Activated CD4-positive, alpha-beta memory T cell treated with anti-CD3 and anti-CD28 coated beads for 36 hours (primary cell): ENCODE measurements at regions of chr6 and their contacts with region 1.

Region 1: DNA sequence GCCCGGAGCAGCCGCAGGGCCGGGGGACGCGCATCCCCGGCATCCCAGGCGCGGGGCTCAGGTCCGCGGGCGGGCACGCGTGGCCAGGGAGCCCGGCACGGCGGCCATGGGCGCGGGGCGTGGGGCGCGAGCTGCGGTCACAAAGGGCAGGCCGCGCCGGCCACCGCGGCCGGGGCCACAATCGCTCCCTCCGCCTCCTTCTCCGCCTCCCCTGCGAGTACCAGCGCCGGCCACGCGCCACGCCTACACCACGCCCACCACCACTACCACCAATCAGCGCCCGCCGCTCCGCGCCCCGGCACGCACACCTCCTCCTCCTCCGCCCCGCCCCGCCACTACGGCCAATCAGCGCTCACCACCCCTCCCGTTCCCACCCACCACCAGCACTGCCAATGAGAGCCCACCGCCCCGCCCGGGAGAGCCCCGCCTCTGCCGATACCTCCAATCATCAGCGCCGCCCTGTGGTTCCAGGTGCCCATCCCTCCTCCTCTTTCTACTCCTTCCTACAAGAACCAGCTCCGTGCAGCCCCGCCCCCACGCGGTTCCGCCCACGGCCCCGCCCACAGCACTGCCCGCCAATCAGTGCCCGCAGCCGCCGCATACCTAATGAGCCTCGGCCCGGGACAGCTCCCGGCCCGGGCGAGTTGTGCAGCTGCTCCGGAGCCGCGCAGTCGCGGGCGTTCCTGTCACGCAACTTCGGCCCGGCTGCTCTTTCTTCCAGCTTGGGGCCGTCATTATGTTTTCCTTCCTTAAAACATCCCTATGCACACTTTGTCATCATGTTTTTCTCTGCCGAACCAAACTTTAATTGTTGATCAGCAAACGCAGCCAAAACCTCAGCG is at the start of gene RPS6KA2:
- DNase-seq: peak; percentile 100
- H3K4me3 Mint-ChIP-seq: peak within 1 kb of the TSS; percentile 87
- H3K27ac Mint-ChIP-seq: peak within 1 kb of the TSS; percentile 58
- H3K4me1 Mint-ChIP-seq: peaks cover 12% of the 10 kb centered on the region
- H3K27me3 Mint-ChIP-seq: peaks cover 25% of the 10 kb centered on the region
- total RNA-seq, gene RPS6KA2: 7.7 to 7.9 TPM

Region 2: DNA sequence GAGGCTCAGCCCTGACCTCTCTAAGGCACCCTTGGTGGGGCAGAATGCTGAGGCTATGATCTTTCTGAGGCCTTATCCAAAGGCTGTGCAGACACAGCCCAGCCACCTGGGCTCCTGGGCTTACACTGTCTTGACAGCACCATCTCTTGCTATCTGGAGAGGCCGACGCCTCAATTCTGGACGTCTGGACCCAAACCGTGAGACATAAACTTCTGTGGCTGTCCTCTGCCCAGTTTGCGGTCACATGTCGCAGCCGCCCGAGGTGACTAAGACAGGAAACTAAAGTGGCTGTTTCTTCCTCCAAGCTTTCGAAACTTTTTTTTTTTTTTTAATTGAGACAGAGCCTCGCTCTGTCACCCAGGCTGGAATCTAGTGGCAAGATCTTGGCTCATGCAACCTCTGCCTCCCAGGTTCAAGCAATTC is 368.4 kb before region 1 on chr6:
- CTCF ChIA-PET with region 1: no interaction called
- POLR2A ChIA-PET with region 1: no interaction called
- intact Hi-C with region 1: loop called (anchors 10 kb)
- DNase-seq: peak; percentile 68
- H3K4me3 Mint-ChIP-seq: peak overlapping the region; percentile 38
- H3K27ac Mint-ChIP-seq: peak overlapping the region; percentile 59
- H3K4me1 Mint-ChIP-seq: peaks cover 32% of the 10 kb centered on the region
- H3K27me3 Mint-ChIP-seq: peaks cover 18% of the 10 kb centered on the region

Region 3: GRCh38 chr6:166342349-166343149 is 284.7 kb before region 1 on chr6 and contains the start of gene SFT2D1:
- CTCF ChIA-PET with region 1: no interaction called
- POLR2A ChIA-PET with region 1: no interaction called
- intact Hi-C with region 1: loop called (anchors 2 kb)
- DNase-seq: peak; percentile 85
- H3K4me3 Mint-ChIP-seq: peak within 1 kb of the TSS; percentile 83
- H3K27ac Mint-ChIP-seq: peak within 1 kb of the TSS; percentile 86
- H3K4me1 Mint-ChIP-seq: peaks cover 11% of the 10 kb centered on the region
- H3K27me3 Mint-ChIP-seq: no peaks in the 10 kb centered on the region
- total RNA-seq, gene SFT2D1: 57.2 to 59.5 TPM

Region 4: DNA sequence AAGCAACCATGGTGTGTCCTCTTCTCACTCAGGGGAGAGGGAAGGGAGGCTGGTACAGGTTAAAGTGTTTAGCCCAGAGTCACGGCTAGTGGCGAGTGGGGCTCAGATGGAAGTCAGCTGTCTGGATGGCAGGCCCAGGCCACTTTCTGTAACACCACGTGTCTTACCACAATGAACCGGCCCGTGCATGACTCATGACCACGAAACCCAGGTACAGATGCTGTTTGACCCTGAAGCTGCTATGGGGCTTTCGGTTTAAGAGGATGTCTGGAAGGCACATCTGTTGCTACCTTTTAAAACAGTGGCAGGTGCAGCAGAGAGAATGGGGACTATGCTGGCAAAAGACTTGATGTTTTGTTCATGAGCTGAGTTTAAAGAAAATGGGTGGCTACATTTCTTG is 208.0 kb before region 1 on chr6:
- CTCF ChIA-PET with region 1: no interaction called
- POLR2A ChIA-PET with region 1: no interaction called
- intact Hi-C with region 1: loop called (anchors 1 kb)
- DNase-seq: peak; percentile 82
- H3K4me3 Mint-ChIP-seq: peak overlapping the region; percentile 4
- H3K27ac Mint-ChIP-seq: peak overlapping the region; percentile 73
- H3K4me1 Mint-ChIP-seq: peaks cover 62% of the 10 kb centered on the region
- H3K27me3 Mint-ChIP-seq: no peaks in the 10 kb centered on the region

Region 5: GRCh38 chr6:166540631-166541331 is 86.5 kb before region 1 on chr6:
- CTCF ChIA-PET with region 1: interaction called, 7 read pairs
- POLR2A ChIA-PET with region 1: no interaction called
- intact Hi-C with region 1: loop called (anchors 1 kb)
- DNase-seq: peak; percentile 86
- H3K4me3 Mint-ChIP-seq: peak overlapping the region; percentile 65
- H3K27ac Mint-ChIP-seq: peak overlapping the region; percentile 85
- H3K4me1 Mint-ChIP-seq: peaks cover 29% of the 10 kb centered on the region
- H3K27me3 Mint-ChIP-seq: no peaks in the 10 kb centered on the region

Region 6: DNA sequence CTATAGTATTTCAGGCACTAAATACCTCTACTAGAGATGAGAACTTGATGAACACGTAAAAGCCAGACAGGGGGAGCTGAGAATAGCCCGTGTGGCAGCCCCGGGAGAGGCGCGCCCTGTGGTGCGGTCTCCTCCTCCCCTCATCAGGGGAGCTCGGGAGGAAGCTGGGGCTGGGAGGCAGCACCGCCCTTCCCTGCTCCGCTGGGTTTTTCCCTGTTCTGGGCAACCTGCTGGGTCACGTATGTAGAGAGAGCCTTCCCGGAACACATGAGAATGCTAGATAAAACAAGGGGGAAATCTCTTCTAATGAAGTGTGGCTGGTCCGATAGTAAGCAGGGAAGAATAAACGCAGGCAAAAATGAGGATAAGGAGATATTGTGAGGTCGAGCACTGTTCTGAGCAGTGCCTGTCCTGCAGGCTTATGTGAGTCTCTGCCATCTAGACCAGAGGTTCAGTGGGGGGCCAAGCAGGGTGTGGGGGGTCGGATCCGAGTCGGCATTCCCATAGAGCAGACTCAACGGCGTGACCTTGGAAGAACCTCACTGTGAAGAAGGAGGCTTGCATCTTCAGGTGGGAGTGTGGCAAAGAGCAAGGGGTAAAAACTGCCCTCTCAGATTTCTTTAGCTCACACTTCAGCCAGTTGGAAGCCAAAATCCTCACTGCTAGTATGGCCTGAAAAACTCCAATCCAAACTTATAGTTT is 13.2 kb after region 1 on chr6:
- CTCF ChIA-PET with region 1: no interaction called
- POLR2A ChIA-PET with region 1: no interaction called
- intact Hi-C with region 1: no loop called
- DNase-seq: peak; percentile 24
- H3K4me3 Mint-ChIP-seq: no peak overlapping the region
- H3K27ac Mint-ChIP-seq: no peak overlapping the region
- H3K4me1 Mint-ChIP-seq: peaks cover 6% of the 10 kb centered on the region
- H3K27me3 Mint-ChIP-seq: peaks cover 19% of the 10 kb centered on the region

Region 7: GRCh38 chr6:166671434-166672081 is 44.3 kb after region 1 on chr6:
- CTCF ChIA-PET with region 1: no interaction called
- POLR2A ChIA-PET with region 1: no interaction called
- intact Hi-C with region 1: no loop called
- DNase-seq: no peak
- H3K4me3 Mint-ChIP-seq: no peak overlapping the region
- H3K27ac Mint-ChIP-seq: no peak overlapping the region
- H3K4me1 Mint-ChIP-seq: no peaks in the 10 kb centered on the region
- H3K27me3 Mint-ChIP-seq: peaks cover 6% of the 10 kb centered on the region

Region 8: GRCh38 chr6:166767230-166767629 is 140.0 kb after region 1 on chr6:
- CTCF ChIA-PET with region 1: no interaction called
- POLR2A ChIA-PET with region 1: no interaction called
- intact Hi-C with region 1: no loop called
- DNase-seq: no peak
- H3K4me3 Mint-ChIP-seq: no peak overlapping the region
- H3K27ac Mint-ChIP-seq: no peak overlapping the region
- H3K4me1 Mint-ChIP-seq: no peaks in the 10 kb centered on the region
- H3K27me3 Mint-ChIP-seq: no peaks in the 10 kb centered on the region

Region 9: DNA sequence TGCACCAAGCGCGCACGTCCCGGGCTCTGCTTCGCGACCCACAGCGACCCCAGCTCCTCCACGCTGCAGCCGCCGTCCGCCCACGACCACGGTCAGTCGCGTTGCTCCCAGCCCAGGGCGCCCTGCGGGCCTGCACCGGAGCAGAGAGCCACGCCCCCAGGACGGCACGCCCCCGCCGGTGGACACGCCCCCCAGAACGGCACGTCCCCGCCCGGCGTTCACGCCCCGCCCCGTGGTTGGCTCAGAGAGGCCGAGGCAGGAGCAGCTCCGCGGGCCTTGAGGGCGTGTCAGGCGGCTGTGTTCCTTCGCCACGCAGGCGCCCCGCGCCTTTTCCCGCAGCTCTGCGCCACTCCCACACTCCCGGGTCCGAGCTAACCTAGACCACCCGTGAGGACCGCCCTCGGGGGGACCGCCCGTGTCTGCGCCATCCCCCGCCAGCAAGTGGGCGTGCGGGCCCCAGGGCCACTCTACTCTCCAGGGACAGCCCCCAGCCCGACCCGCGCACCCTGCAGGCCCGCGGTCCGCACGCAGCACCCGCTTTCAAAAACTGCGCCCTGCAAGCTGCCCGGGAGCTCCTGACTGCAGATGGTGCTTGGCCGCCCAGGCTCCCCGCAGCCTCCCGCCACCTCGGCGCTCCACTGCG is 329.3 kb after region 1 on chr6 and contains the start of gene RNASET2:
- CTCF ChIA-PET with region 1: no interaction called
- POLR2A ChIA-PET with region 1: no interaction called
- intact Hi-C with region 1: loop called (anchors 2 kb)
- DNase-seq: peak; percentile 99
- H3K4me3 Mint-ChIP-seq: peak within 1 kb of the TSS; percentile 89
- H3K27ac Mint-ChIP-seq: peak within 1 kb of the TSS; percentile 94
- H3K4me1 Mint-ChIP-seq: peaks cover 73% of the 10 kb centered on the region
- H3K27me3 Mint-ChIP-seq: no peaks in the 10 kb centered on the region
- total RNA-seq, gene RNASET2: 62.5 to 66.1 TPM